ENCODE measurements at regions of chr15 and their contacts with region 1.

Region 1: GRCh38 chr15:101088788-101089583 is 162.9 kb downstream of the CHSY1 start:
- DNase-seq: no peak
- H3K4me3 ChIP-seq: peak overlapping the region; percentile 15; the same call in 1 of the 2 replicates
- CTCF ChIP-seq: peak; percentile 94

Region 2: DNA sequence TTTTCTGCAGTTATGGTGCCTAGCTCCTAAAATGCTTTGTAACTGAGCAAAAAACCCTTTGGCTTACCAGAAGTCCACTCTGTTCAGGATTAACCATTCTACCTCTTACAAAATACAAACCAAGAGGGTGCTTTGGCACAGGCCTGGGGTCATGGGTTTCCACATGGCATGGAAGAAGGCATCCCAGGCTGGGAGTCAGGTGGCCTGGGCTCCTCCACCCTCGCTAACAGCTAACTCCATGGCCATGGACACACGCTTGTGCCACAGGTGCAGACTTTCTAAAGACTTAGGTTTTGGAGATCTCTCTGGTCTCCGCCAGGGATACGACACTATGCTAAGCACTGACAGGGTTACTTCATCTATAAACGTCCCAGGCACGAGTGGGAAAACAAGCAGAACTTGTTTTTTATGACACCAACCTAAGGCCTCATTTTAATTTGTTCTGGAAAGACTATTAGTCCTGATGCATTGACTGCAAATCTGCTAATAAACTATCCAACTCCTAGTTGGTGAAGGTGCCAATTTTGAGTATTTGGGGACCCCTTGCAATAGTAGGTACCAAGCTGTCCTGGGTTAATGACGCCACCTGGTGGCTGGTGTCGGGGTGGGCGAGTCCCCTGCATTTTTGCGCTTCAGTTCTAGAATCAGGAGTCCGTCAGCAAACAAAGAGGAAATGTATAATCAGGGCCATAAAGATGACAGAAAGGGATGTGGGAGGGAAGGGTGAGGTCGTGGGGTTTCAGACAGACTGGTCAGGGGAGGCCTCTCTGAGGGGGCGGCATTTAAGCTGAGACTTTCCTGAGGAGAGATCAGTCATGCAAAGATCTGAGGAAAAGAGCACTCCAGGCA is 219.6 kb before region 1 on chr15:
- CTCF ChIA-PET with region 1: no interaction called
- POLR2A ChIA-PET with region 1: no interaction called
- DNase-seq: no peak
- H3K4me3 ChIP-seq: no peak overlapping the region
- CTCF ChIP-seq: peak; percentile 18

Region 3: DNA sequence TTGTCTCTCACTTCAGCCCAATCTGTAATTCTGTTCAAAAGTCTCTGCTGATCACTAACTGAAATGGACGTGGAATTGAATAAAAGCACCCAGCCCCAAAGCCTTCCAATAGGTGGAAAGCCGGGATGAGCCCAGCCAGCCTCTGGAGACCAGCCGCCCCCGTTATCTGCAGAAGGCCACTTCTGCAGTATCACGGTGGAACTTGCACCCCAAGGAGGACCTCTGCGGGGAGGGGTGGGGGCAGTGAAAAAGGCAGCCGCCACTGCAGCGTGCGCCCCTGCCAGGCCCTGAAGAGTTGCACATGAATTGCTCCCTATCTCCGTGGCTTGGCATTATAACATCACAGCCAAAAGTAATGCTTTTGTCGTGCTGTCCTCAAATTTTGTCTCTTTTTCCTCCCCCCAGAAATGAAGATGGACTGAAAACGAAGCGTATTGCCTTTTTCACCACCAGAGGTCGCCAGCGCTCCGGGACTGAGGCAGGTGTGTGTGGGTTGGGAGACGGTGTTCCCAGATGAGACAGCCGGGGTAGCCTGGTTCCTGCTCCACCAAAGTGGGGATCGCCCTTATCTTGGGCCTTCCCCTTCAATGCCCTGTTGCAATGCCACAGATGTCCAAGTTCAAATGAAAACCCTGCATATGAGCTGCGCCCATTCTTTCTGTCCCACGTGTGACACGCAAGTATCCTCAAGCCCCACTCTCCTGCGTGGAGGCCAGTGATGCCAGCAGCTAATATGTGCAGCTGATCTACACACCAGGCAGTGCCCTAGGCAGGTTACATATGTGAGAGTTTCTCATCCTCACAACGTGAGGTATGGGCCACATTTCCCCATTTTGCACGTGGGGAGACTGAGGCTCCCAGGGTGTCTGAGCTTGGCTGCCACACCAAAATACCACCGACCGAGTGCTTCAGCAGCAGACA is 73.8 kb before region 1 on chr15:
- CTCF ChIA-PET with region 1: interaction called, 12 read pairs
- POLR2A ChIA-PET with region 1: no interaction called
- DNase-seq: no peak
- H3K4me3 ChIP-seq: no peak overlapping the region
- CTCF ChIP-seq: peak; percentile 83

Region 4: GRCh38 chr15:101112336-101113113 is 23.5 kb after region 1 on chr15:
- CTCF ChIA-PET with region 1: interaction called, 21 read pairs
- POLR2A ChIA-PET with region 1: no interaction called
- DNase-seq: no peak
- H3K4me3 ChIP-seq: no peak overlapping the region
- CTCF ChIP-seq: no peak

Region 5: GRCh38 chr15:101242160-101242998 is 153.4 kb after region 1 on chr15:
- CTCF ChIA-PET with region 1: interaction called, 278 read pairs
- POLR2A ChIA-PET with region 1: interaction called, 3 read pairs
- DNase-seq: no peak
- H3K4me3 ChIP-seq: no peak overlapping the region
- CTCF ChIP-seq: no peak

Region 6: DNA sequence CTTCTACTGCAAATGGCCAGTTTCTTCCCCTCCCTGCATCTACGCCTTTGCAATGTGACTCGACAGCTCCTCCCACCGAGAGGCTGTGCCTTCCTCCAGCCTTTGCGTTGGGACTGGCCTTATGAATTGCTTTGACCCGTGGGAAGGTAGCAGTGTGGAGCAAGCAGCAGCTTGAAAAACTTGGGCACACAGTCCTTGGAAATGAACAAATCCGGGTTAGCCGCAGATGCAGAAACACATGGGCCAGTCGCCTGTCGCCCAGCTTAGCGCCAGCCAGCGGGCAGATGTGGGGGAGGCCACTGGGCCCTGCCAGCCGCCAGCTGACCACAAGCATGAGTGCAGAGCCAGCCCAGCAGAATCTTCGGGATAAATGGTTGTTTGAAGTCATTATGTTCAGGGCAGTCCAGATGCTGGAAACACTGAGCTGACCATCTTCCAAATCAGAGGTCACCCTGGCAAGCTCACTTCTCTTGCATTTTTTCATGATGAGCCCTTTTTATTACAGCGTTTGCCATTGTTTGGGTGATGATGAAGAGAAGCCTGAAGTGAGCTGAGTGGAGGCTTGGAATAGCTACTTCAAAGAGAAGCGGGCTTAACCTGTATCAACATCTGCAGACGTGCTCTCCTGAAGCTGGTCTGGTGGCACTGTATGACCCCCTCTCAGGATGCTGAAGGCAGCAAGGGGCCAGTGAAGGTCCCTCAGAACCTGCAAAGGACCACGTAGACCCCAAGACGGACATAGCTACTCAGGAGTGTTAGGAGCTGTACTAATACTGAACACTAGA is 178.5 kb after region 1 on chr15:
- CTCF ChIA-PET with region 1: interaction called, 60 read pairs
- POLR2A ChIA-PET with region 1: no interaction called
- DNase-seq: peak; percentile 31
- H3K4me3 ChIP-seq: no peak overlapping the region
- CTCF ChIP-seq: no peak